Brain microvascular endothelial cell (primary cell): ENCODE measurements at regions of chr17 and their contacts with region 1.

Region 1: GRCh38 chr17:81977211-81978027 is at the start of gene ASPSCR1:
- DNase-seq: peak; percentile 71
- H3K4me3 ChIP-seq: peak within 1 kb of the TSS; percentile 72
- H3K27ac ChIP-seq: peak within 1 kb of the TSS; percentile 93
- H3K27me3 ChIP-seq: no peaks in the 10 kb centered on the region
- CTCF ChIP-seq: no peak

Region 2: DNA sequence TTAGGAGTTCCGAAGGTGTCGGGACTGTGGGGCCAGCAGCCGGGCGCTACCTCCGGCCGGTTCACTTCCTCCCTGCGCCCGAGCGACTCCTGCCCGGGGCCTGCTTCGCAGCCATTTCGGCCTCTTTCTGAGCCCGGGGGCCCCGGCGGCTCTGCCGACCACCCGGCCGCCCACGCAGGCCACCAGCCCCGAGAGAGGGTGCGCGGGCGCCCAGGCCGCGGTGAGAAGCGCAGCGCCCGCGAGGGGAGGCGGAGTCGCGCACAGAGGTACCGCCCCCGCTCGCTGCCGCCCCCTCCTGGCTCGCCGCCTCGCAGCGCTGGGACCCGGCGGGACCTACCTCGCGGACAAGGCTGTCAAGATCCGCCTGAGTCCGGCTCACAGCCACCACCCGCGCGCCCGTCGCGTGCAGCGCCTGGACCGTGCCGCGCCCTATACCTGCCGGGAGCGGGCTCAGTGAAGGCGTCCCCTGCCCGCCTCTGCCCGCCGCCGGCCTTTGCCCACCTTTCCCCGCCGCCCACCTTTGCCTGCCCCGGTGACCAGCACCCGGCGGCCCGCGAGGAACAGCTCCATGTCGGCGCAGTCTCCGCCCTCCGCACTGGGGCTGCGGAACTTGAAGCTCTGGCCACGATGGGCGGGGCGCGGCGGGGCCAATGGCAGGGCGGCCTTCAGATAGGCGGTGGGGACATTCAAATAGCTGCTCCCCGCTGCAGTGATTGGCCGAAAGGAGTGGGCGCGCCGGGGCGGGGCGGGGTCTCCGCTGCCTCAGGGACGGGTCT is 59.9 kb after region 1 on chr17 and contains the start of gene DCXR:
- in situ Hi-C with region 1: loop called (anchors 10 kb)
- DNase-seq: peak; percentile 94
- H3K4me3 ChIP-seq: peak within 1 kb of the TSS; percentile 67
- H3K27ac ChIP-seq: peak within 1 kb of the TSS; percentile 59
- H3K27me3 ChIP-seq: no peaks in the 10 kb centered on the region
- CTCF ChIP-seq: peak; percentile 62